Ovary (tissue), 10 donors: ENCODE measurements at regions of chr19 and their contacts with region 1.

Region 1: GRCh38 chr19:39397360-39398296 is 6.5 kb downstream of the MED29 start:
- DNase-seq: peak; percentile 81 to 93 (median 91)
- H3K4me3 ChIP-seq: no peak overlapping the region
- H3K27ac ChIP-seq: peak overlapping the region; percentile 66 to 71
- H3K4me1 ChIP-seq: peaks cover 8% of the 10 kb centered on the region
- H3K27me3 ChIP-seq: no peaks in the 10 kb centered on the region
- CTCF ChIP-seq: peak; percentile 92 to 96 (median 96)
- EP300 ChIP-seq: no peak
- POLR2A ChIP-seq: peak; percentile 28

Region 2: DNA sequence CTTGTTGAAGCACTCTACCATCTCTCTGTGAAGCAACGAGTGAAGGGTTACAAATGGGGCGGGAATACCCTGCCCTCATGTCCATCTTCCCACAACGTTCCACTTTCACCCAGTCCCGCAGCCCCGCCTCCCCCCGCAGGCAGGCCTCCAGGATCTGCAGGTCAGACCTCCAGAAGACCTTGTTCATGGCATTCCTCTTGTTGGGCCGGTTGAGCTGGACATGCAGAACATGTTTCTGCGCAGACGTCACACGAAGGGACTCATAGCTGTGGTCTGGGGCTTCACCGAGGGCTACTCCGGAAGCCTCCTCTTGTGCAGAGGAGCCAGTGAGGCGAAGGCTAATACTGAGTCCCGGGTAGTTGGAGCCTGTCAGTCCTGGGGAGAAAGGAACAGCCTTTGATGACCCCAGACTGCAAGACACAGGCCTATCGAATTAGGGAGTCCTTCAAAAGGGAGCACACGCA is 566.5 kb before region 1 on chr19:
- intact Hi-C with region 1: loop called in 1 of 4 experiments (anchors 5 kb)
- DNase-seq: peak; percentile 46 to 67 (median 61)
- H3K4me3 ChIP-seq: peak overlapping the region; percentile 71
- H3K27ac ChIP-seq: peak overlapping the region; percentile 13 to 76
- H3K4me1 ChIP-seq: peaks cover 7% of the 10 kb centered on the region
- H3K27me3 ChIP-seq: no peaks in the 10 kb centered on the region
- CTCF ChIP-seq: peak in 1 of 3 donors; percentile 35
- EP300 ChIP-seq: no peak
- POLR2A ChIP-seq: no peak

Region 3: DNA sequence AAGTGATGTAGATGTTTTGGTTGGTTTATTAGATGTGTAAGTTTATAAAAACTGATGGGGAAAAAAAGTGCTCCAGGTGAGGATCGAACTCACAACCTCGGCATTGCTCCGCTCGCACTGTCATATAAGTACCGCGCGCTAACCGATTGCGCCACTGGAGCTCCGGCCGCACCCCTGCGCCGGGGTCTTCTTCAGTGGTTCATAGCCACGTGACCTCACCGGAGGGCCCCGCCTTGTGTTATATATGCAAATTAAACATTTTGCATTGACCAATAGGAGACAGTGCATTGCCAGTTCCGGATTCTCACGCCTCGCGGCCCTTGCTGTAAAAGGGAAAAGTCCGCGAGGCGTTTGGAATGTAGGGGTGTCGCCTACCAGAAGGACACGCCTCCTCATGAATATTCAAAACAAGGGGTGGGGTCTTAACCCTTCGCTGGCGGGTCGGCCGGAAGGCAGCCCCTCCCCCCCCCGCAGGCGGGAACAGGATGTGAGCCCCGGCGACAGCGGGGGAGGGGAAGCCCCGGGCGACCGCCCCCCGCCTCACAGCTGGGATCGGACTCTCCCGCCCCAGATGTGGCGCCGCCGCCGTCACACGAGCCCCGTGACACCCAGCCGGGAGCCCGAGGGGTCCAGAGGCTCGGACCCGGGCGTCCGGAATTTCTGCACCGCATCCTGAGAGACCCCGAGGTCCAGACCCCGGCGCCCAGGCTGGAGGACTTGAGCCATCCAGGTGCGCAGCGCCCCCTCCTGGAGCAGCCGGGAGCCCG is 14.7 kb after region 1 on chr19 and contains the start of gene PLEKHG2:
- intact Hi-C with region 1: loop called in 1 of 4 experiments (anchors 2 kb)
- DNase-seq: peak; percentile 96 to 98 (median 98)
- H3K4me3 ChIP-seq: peak within 1 kb of the TSS; percentile 97
- H3K27ac ChIP-seq: peak within 1 kb of the TSS; percentile 87 to 98
- H3K4me1 ChIP-seq: peaks cover 24% of the 10 kb centered on the region
- H3K27me3 ChIP-seq: no peaks in the 10 kb centered on the region
- CTCF ChIP-seq: peak; percentile 91 to 93 (median 92)
- EP300 ChIP-seq: peak; percentile 86
- POLR2A ChIP-seq: peak; percentile 57
- total RNA-seq, gene PLEKHG2: 8.6 to 68.0 (median 33.9) TPM

Region 4: GRCh38 chr19:39506944-39507714 is 109.5 kb after region 1 on chr19:
- intact Hi-C with region 1: no loop called
- DNase-seq: peak in 2 of 5 donors; percentile 59 to 65
- H3K4me3 ChIP-seq: peak overlapping the region; percentile 22
- H3K27ac ChIP-seq: no peak overlapping the region
- H3K4me1 ChIP-seq: peaks cover 9% of the 10 kb centered on the region
- H3K27me3 ChIP-seq: no peaks in the 10 kb centered on the region
- CTCF ChIP-seq: no peak
- EP300 ChIP-seq: no peak
- POLR2A ChIP-seq: no peak